Activated CD4-positive, alpha-beta T cell treated with anti-CD3 and anti-CD28 coated beads, Interleukin-2, amount 10 ng/mL, durations not matched to agents 24 days and 14 days (primary cell): ENCODE measurements at regions of chr6 and their contacts with region 1.

Region 1: GRCh38 chr6:40387127-40387870 is 199.9 kb downstream of the LRFN2 start:
- DNase-seq: peak; percentile 69
- H3K4me3 Mint-ChIP-seq: peak overlapping the region; percentile 42
- H3K27ac Mint-ChIP-seq: peak overlapping the region; percentile 77
- H3K4me1 Mint-ChIP-seq: peaks cover 57% of the 10 kb centered on the region
- H3K27me3 Mint-ChIP-seq: no peaks in the 10 kb centered on the region

Region 2: GRCh38 chr6:40258531-40258930 is 128.8 kb before region 1 on chr6:
- intact Hi-C with region 1: no loop called
- DNase-seq: no peak
- H3K4me3 Mint-ChIP-seq: no peak overlapping the region
- H3K27ac Mint-ChIP-seq: no peak overlapping the region
- H3K4me1 Mint-ChIP-seq: no peaks in the 10 kb centered on the region
- H3K27me3 Mint-ChIP-seq: peaks cover 12% of the 10 kb centered on the region

Region 3: DNA sequence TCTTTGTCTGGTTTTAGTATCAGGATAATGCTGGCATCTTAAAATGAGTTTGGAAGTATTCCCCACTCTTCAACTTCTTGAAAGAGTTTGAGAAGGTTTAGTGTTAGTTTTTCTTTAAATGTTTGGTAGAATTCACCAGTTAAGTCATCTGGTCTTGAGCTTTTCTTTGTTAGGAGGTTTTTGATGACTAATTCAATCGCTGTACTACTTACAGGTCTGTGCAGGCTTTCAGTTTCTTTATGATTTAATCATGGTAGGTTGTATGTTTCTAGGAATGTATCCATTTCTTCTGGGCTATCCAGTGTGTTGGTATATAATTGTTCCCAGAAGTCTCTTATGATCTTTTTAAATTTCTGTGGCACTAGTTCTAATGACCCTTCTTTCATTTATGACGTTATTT is 15.7 kb before region 1 on chr6:
- intact Hi-C with region 1: loop called (anchors 1 kb)
- DNase-seq: peak; percentile 53
- H3K4me3 Mint-ChIP-seq: peak overlapping the region; percentile 73
- H3K27ac Mint-ChIP-seq: peak overlapping the region; percentile 89
- H3K4me1 Mint-ChIP-seq: peaks cover 42% of the 10 kb centered on the region
- H3K27me3 Mint-ChIP-seq: no peaks in the 10 kb centered on the region

Region 4: GRCh38 chr6:40409716-40410397 is 22.6 kb after region 1 on chr6:
- intact Hi-C with region 1: no loop called
- DNase-seq: no peak
- H3K4me3 Mint-ChIP-seq: no peak overlapping the region
- H3K27ac Mint-ChIP-seq: no peak overlapping the region
- H3K4me1 Mint-ChIP-seq: peaks cover 22% of the 10 kb centered on the region
- H3K27me3 Mint-ChIP-seq: peaks cover 7% of the 10 kb centered on the region

Region 5: DNA sequence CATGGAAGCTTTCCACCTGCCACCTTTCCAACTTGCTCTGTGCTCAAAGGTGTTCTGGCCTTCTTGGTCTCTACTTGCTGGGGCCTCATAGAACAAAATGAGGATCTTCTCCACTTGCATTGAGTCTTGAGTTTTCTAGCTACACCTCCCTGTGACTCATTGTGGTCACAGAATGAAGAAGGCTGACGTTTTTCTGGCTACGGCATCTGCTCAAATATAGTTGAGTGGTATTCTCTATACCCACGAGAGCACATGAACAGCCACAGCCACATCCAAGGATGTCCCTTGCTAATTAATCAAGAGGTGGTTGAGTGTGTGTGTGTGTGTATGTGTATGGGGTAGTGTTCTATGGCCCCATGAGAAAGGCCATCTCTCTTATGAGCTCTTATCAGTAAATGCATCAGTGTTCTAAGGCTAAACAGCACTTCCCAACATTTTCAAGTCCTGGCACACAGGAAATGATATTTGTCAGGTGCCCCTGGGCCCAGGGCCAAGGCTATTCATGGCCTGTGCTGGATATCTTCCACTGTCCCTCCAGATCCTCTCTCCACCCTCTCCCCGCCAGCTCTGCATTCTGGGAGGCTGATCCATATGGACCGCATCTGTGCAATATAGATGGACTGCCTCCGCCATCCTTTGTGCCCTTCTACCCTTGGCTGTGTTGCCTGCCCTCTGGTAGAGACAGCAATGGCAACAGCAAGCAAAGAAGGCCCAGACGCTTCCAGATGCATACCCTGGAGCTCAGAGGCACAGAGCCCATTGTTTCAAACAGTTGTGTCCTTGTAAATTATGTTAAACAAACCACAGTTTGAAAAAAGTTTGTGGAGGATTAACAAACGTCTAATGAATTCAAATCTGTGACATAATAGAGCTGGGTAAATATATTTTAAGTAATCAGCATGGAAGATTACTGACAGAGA is 49.6 kb after region 1 on chr6:
- intact Hi-C with region 1: loop called (anchors 5 kb)
- DNase-seq: peak; percentile 85
- H3K4me3 Mint-ChIP-seq: peak overlapping the region; percentile 26
- H3K27ac Mint-ChIP-seq: peak overlapping the region; percentile 63
- H3K4me1 Mint-ChIP-seq: peaks cover 27% of the 10 kb centered on the region
- H3K27me3 Mint-ChIP-seq: no peaks in the 10 kb centered on the region

Region 6: GRCh38 chr6:40936818-40937251 is 549.5 kb after region 1 on chr6:
- intact Hi-C with region 1: no loop called
- DNase-seq: no peak
- H3K4me3 Mint-ChIP-seq: no peak overlapping the region
- H3K27ac Mint-ChIP-seq: no peak overlapping the region
- H3K4me1 Mint-ChIP-seq: no peaks in the 10 kb centered on the region
- H3K27me3 Mint-ChIP-seq: peaks cover 22% of the 10 kb centered on the region